Caco-2 (cell line): ENCODE measurements at regions of chr5 and their contacts with region 1.

Region 1: GRCh38 chr5:140042643-140043500 is at the start of gene NRG2:
- DNase-seq: peak; percentile 53 to 72
- H3K4me3 ChIP-seq: peak within 1 kb of the TSS; percentile 56
- H3K4me3 Mint-ChIP-seq: peak within 1 kb of the TSS; percentile 69
- H3K27ac Mint-ChIP-seq: no peak within 1 kb of the TSS
- H3K4me1 ChIP-seq: peaks cover 6% of the 10 kb centered on the region; the same call in 1 of the 2 replicates
- H3K4me1 Mint-ChIP-seq: peaks cover 6% of the 10 kb centered on the region
- H3K27me3 ChIP-seq: peaks cover 1% of the 10 kb centered on the region
- H3K27me3 Mint-ChIP-seq: peaks cover 23% of the 10 kb centered on the region
- CTCF ChIP-seq: peak; percentile 55 to 69
- total RNA-seq, gene NRG2: 0.59 TPM in 1 of 2 replicates, not detected in the other

Region 2: DNA sequence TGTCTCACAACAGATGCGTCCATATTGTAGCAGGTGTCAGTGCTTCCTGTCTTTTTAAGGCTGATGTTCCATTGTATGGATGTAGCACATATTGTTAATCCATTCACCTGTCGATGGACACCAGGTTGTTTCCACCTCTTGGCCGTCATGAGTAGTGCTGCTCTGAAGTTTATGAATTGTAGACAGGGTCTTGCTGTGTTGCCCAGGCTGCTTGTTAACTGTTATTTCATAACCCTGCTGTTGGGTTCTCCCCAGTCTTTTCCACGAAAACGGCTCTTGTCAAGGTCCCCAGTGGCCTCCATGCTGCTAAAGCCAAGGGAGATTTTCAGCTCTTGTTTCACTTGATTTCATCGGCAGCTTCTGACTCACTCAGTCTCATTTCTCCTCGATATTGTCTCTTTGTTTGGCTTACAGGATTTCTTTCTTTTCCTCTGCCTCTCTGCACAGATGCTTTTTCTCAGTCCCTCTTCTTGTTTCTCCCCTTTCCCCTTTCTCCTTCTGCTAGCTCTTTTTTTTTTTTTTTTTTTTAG is 259.4 kb before region 1 on chr5:
- CTCF ChIA-PET with region 1: no interaction called
- POLR2A ChIA-PET with region 1: no interaction called
- intact Hi-C with region 1: no loop called
- DNase-seq: no peak
- H3K4me3 ChIP-seq: no peak overlapping the region
- H3K4me3 Mint-ChIP-seq: no peak overlapping the region
- H3K27ac Mint-ChIP-seq: no peak overlapping the region
- H3K4me1 ChIP-seq: no peaks in the 10 kb centered on the region
- H3K4me1 Mint-ChIP-seq: no peaks in the 10 kb centered on the region
- H3K27me3 ChIP-seq: no peaks in the 10 kb centered on the region; the same call in none of the 2 replicates
- H3K27me3 Mint-ChIP-seq: peaks cover 18% of the 10 kb centered on the region
- CTCF ChIP-seq: no peak

Region 3: DNA sequence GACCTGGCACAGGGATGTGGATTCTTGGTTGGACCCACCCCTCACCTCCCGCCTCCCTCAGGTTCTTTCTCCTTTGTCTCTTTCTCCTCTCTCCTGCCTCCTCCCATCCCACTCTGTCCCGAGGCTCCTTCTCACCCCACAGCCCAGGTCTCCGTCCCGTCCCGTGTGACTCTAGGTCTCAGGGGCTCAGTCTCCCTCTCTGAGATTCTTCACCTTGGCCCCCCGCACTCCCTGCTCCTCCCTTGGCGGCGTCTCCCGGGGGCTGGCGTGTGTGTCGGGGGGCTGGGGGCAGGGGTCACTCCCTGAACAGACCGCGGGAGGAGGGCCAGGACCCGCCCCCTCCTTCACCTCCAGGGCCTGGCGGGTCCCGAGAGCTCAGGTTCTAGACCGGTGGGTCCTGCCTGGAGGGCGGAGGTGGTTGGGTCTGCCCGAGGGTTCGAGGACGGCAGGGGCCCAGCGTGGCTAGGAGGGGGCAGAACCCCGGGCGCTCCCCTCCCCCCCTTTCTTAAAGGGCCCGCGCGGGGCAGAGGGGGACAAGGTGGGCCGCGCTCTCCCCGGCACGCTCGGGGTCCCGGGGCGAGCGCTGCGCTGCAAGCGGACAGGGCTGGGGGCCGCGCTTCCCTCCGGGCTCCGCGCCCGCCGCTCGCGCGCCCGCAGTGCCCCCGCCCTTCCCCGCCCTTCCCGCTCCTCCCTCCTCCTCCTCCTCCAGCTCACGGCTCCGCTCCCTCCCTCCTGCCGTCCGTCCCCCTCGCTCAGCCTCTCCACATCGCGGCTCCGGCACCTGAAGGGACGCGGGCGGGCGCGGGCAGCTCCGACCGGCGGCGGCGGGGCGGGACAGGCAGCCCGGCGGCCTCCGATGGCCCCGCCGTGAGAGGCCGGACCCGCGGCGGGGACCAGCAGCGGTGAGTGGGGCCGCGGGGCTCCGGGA is 247.5 kb before region 1 on chr5 and contains the start of gene PSD2:
- CTCF ChIA-PET with region 1: no interaction called
- POLR2A ChIA-PET with region 1: no interaction called
- intact Hi-C with region 1: no loop called
- DNase-seq: peak in 1 of 2 experiments; percentile 42
- H3K4me3 ChIP-seq: peak within 1 kb of the TSS; percentile 23
- H3K4me3 Mint-ChIP-seq: no peak within 1 kb of the TSS
- H3K27ac Mint-ChIP-seq: no peak within 1 kb of the TSS
- H3K4me1 ChIP-seq: no peaks in the 10 kb centered on the region
- H3K4me1 Mint-ChIP-seq: no peaks in the 10 kb centered on the region
- H3K27me3 ChIP-seq: peaks cover 10% of the 10 kb centered on the region
- H3K27me3 Mint-ChIP-seq: peaks cover 33% of the 10 kb centered on the region
- CTCF ChIP-seq: no peak
- total RNA-seq, gene PSD2: 0.09 and 0.12 TPM in 2 replicates

Region 4: GRCh38 chr5:139998837-139999236 is 44.0 kb before region 1 on chr5:
- CTCF ChIA-PET with region 1: no interaction called
- POLR2A ChIA-PET with region 1: no interaction called
- intact Hi-C with region 1: loop called (anchors 5 kb)
- DNase-seq: no peak
- H3K4me3 ChIP-seq: no peak overlapping the region
- H3K4me3 Mint-ChIP-seq: no peak overlapping the region
- H3K27ac Mint-ChIP-seq: no peak overlapping the region
- H3K4me1 ChIP-seq: peaks cover 17% of the 10 kb centered on the region
- H3K4me1 Mint-ChIP-seq: no peaks in the 10 kb centered on the region
- H3K27me3 ChIP-seq: no peaks in the 10 kb centered on the region
- H3K27me3 Mint-ChIP-seq: peaks cover 8% of the 10 kb centered on the region
- CTCF ChIP-seq: no peak

Region 5: GRCh38 chr5:140023611-140024191 is 19.2 kb before region 1 on chr5:
- CTCF ChIA-PET with region 1: no interaction called
- POLR2A ChIA-PET with region 1: no interaction called
- intact Hi-C with region 1: loop called (anchors 2 kb)
- DNase-seq: no peak
- H3K4me3 ChIP-seq: no peak overlapping the region
- H3K4me3 Mint-ChIP-seq: no peak overlapping the region
- H3K27ac Mint-ChIP-seq: no peak overlapping the region
- H3K4me1 ChIP-seq: peaks cover 33% of the 10 kb centered on the region
- H3K4me1 Mint-ChIP-seq: peaks cover 7% of the 10 kb centered on the region
- H3K27me3 ChIP-seq: no peaks in the 10 kb centered on the region
- H3K27me3 Mint-ChIP-seq: no peaks in the 10 kb centered on the region
- CTCF ChIP-seq: no peak

Region 6: GRCh38 chr5:140157032-140157803 is 114.3 kb after region 1 on chr5:
- CTCF ChIA-PET with region 1: no interaction called
- POLR2A ChIA-PET with region 1: no interaction called
- intact Hi-C with region 1: loop called (anchors 1 kb)
- DNase-seq: peak; percentile 83 to 89
- H3K4me3 ChIP-seq: no peak overlapping the region
- H3K4me3 Mint-ChIP-seq: no peak overlapping the region
- H3K27ac Mint-ChIP-seq: no peak overlapping the region
- H3K4me1 ChIP-seq: peaks cover 6% of the 10 kb centered on the region; the same call in 1 of the 2 replicates
- H3K4me1 Mint-ChIP-seq: peaks cover 2% of the 10 kb centered on the region
- H3K27me3 ChIP-seq: no peaks in the 10 kb centered on the region
- H3K27me3 Mint-ChIP-seq: no peaks in the 10 kb centered on the region
- CTCF ChIP-seq: peak; percentile 91 to 96

Region 7: GRCh38 chr5:140261403-140262171 is 218.7 kb after region 1 on chr5:
- CTCF ChIA-PET with region 1: no interaction called
- POLR2A ChIA-PET with region 1: no interaction called
- intact Hi-C with region 1: no loop called
- DNase-seq: peak; percentile 73 to 76
- H3K4me3 ChIP-seq: no peak overlapping the region
- H3K4me3 Mint-ChIP-seq: peak overlapping the region; percentile 12
- H3K27ac Mint-ChIP-seq: peak overlapping the region; percentile 64
- H3K4me1 ChIP-seq: peaks cover 11% of the 10 kb centered on the region
- H3K4me1 Mint-ChIP-seq: peaks cover 35% of the 10 kb centered on the region
- H3K27me3 ChIP-seq: no peaks in the 10 kb centered on the region
- H3K27me3 Mint-ChIP-seq: no peaks in the 10 kb centered on the region
- CTCF ChIP-seq: peak in 1 of 2 experiments; percentile 11